Aorta (tissue), 5 donors: ENCODE measurements at regions of chr6 and their contacts with region 1.

Region 1: DNA sequence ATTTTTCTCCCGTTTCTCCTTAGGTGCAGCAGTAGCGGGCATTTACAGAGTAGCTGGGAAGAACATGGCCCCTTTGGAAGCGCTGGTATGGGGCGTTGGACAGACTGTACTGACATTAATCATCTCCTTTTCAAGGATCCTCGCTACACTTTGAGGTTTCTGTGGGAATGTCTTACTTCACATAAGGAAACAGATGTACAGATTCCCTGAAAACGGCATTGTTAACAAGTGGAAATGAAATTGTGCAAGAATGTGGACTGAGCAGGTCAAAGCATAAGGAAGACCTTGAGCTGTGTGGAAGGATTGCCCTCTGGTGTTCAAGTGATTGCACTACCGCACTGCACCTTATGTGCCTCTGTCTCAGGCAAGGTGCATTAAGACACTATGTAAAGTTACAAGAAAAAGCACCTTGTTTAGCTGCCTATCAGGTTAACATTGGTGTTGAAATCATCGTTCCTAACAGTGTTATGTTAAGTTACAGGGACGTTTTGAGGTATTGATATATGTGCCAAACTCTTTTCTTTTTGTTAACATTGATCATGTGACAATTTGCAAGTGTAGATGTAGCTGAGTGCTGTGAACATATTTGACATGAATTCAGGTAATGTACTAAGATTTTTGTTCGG is 38.0 kb downstream of the TMEM170B start:
- DNase-seq: no peak
- ATAC-seq: peak; percentile 90
- H3K4me3 ChIP-seq: no peak overlapping the region
- H3K27ac ChIP-seq: no peak overlapping the region
- H3K4me1 ChIP-seq: no peaks in the 10 kb centered on the region
- H3K27me3 ChIP-seq: no peaks in the 10 kb centered on the region

Region 2: GRCh38 chr6:10954590-10955010 is 620.9 kb before region 1 on chr6:
- intact Hi-C with region 1: loop called in 1 of 2 experiments (anchors 5 kb)
- DNase-seq: peak; percentile 74 to 87
- ATAC-seq: peak; percentile 54
- H3K4me3 ChIP-seq: no peak overlapping the region
- H3K27ac ChIP-seq: no peak overlapping the region
- H3K4me1 ChIP-seq: no peaks in the 10 kb centered on the region
- H3K27me3 ChIP-seq: no peaks in the 10 kb centered on the region

Region 3: DNA sequence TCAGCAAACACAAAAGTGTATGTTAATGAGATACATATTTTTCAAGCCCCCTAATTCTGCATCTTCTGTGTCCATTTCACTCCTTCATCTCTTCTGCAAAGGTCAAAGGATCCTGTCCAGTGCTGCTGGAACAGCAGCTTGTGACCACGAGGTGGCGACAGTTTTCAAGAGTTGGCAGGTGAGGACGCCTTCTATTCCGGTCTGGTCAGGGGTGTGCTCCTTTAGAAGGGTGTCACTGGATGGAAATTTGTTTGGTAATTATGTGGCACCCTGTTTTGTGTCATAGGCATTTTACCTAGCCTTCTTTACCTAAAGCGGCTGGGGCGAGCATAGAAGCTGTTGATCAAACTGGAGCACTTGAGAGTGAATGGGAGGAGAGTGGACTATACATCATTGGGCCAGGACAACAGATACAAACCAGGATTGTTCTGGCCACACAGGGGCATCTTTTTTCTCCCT is 431.1 kb before region 1 on chr6:
- intact Hi-C with region 1: loop called (anchors 5 kb)
- DNase-seq: peak; percentile 85 to 91
- ATAC-seq: peak; percentile 89
- H3K4me3 ChIP-seq: no peak overlapping the region
- H3K27ac ChIP-seq: no peak overlapping the region
- H3K4me1 ChIP-seq: no peaks in the 10 kb centered on the region
- H3K27me3 ChIP-seq: no peaks in the 10 kb centered on the region

Region 4: DNA sequence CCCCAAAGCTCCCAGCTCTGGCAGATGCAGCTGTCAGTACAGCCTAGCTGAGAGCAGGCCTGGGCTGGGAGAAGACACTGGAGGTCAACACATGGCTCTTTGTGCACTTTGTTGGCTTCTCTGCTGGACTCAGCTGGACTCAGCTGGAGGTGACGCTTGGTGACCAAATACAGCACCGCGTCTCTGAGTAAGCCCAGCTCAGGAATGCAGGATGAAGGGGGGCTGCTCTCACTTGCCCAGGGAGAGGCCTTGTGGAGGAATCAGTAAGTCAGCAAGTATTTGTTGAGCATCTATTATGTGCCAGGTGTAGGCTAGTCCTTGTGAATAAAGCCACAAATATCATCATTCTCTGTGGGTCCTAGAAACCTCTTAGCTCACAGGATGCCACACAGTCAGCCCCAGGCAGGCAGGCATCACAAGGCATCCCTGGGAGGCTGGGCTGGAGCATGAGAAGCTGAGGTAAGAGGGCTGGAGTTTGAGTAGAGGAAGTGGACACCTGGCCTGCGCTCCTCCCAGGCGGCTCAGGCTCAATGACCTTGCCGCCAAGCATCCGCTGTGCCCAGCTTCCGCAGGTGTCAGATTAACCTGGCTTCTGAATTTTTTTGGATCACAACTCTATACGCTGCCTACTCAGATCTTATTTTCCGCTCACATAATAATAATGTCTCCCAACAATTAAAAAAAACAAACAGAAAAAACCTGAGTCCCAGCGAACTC is 57.4 kb after region 1 on chr6:
- intact Hi-C with region 1: no loop called
- DNase-seq: peak; percentile 58 to 77
- ATAC-seq: peak; percentile 23
- H3K4me3 ChIP-seq: no peak overlapping the region
- H3K27ac ChIP-seq: no peak overlapping the region
- H3K4me1 ChIP-seq: no peaks in the 10 kb centered on the region
- H3K27me3 ChIP-seq: no peaks in the 10 kb centered on the region

Region 5: GRCh38 chr6:12331956-12332749 is 756.6 kb after region 1 on chr6:
- intact Hi-C with region 1: no loop called
- DNase-seq: no peak
- ATAC-seq: no peak
- H3K4me3 ChIP-seq: no peak overlapping the region
- H3K27ac ChIP-seq: peak overlapping the region; percentile 76 to 91
- H3K4me1 ChIP-seq: peaks cover 4 to 12% of the 10 kb centered on the region in 2 donors
- H3K27me3 ChIP-seq: no peaks in the 10 kb centered on the region